AG04450 (cell line): ENCODE measurements at regions of chr13 and their contacts with region 1.

Region 1: DNA sequence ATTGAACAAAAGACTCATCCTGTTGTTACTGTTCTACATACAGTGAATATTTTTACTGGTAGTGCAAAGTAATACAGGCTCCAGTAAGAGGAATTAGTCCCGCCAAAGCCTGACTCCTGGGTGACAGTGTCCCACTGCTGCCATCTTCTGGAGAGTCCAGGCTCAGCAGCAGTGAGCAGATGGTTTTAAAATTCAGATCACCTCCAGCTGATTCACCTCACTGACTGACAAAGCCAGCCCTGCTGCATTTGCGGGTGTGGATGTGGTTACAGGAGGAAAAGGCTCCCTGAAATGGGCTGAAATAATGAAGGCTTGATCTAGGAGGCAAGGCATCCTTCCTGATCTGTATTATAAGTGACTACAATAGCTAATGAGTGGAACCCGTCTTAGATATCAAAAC is 18.3 kb downstream of the PABPC3 start:
- DNase-seq: peak; percentile 50
- H3K4me3 ChIP-seq: no peak overlapping the region
- H3K27ac ChIP-seq: no peak overlapping the region
- H3K27me3 ChIP-seq: peaks cover 4% of the 10 kb centered on the region
- CTCF ChIP-seq: peak; percentile 94

Region 2: GRCh38 chr13:24842549-24843274 is 271.5 kb before region 1 on chr13:
- CTCF ChIA-PET with region 1: no interaction called
- POLR2A ChIA-PET with region 1: no interaction called
- DNase-seq: no peak
- H3K4me3 ChIP-seq: no peak overlapping the region
- H3K27ac ChIP-seq: no peak overlapping the region
- H3K27me3 ChIP-seq: no peaks in the 10 kb centered on the region
- CTCF ChIP-seq: no peak

Region 3: DNA sequence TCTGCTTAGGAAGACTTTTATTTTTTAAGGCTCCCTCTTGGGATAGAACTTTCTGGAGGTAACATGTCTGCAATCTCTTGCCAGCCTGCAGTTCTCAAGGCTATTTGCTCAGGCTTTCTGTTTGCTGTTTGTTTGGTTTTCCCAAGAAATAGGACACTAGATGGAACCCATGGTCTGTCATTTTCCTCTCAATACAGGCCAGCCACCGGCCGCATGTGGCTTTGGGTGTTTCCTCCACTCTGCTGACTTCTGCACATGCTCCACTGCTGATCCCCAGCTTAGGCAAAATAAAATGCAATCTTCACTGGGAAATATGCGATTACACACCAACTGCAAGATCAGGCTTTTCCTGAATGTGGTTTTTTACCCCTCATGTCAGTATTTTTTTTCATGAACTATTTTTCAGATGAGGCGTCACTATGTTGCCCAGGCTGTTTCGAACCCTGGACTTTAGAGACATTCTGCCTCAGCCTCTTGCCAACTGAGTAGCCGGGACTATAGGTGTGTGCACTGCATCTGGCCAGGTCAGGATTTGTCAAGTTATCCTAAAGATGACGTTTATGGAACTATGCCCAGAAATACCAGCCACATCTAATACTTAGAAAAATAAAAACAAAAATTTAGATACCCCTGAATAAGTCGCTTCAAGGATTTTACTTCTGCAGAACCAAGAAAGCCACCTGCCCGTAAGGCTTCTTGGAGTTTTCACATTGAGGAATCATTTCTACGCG is 112.6 kb before region 1 on chr13:
- CTCF ChIA-PET with region 1: interaction called, 14 read pairs
- POLR2A ChIA-PET with region 1: no interaction called
- DNase-seq: no peak
- H3K4me3 ChIP-seq: no peak overlapping the region
- H3K27ac ChIP-seq: no peak overlapping the region
- H3K27me3 ChIP-seq: no peaks in the 10 kb centered on the region
- CTCF ChIP-seq: no peak

Region 4: GRCh38 chr13:25085125-25085742 is 29.0 kb before region 1 on chr13:
- CTCF ChIA-PET with region 1: interaction called, 17 read pairs
- POLR2A ChIA-PET with region 1: no interaction called
- DNase-seq: no peak
- H3K4me3 ChIP-seq: no peak overlapping the region
- H3K27ac ChIP-seq: no peak overlapping the region
- H3K27me3 ChIP-seq: peaks cover 2% of the 10 kb centered on the region
- CTCF ChIP-seq: peak; percentile 73

Region 5: GRCh38 chr13:25103711-25104110 is 10.5 kb before region 1 on chr13:
- CTCF ChIA-PET with region 1: interaction called, 11 read pairs
- POLR2A ChIA-PET with region 1: interaction called, 3 read pairs
- DNase-seq: no peak
- H3K4me3 ChIP-seq: no peak overlapping the region
- H3K27ac ChIP-seq: no peak overlapping the region
- H3K27me3 ChIP-seq: peaks cover 2% of the 10 kb centered on the region
- CTCF ChIP-seq: no peak

Region 6: DNA sequence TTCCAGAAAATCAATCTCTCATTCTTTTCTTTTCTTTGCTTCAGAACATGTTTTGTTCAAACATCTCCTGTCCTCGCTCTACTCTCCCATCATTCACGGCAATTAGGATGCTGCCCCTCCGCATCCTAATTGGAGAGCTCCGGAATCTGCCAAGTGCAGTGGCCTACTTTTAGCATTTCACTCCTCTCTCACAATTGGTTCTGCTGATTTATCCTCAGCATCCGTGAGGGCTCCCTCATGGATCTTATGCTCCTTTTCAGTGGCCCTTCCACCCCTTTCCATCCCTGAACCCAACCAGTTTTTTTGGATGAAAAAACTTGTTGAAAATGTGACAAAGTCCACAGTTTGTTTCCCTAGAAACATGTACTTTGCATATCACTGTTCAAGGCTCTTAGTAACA is 35.5 kb after region 1 on chr13:
- CTCF ChIA-PET with region 1: no interaction called
- POLR2A ChIA-PET with region 1: no interaction called
- DNase-seq: no peak
- H3K4me3 ChIP-seq: no peak overlapping the region
- H3K27ac ChIP-seq: no peak overlapping the region
- H3K27me3 ChIP-seq: peaks cover 2% of the 10 kb centered on the region
- CTCF ChIP-seq: no peak

Region 7: DNA sequence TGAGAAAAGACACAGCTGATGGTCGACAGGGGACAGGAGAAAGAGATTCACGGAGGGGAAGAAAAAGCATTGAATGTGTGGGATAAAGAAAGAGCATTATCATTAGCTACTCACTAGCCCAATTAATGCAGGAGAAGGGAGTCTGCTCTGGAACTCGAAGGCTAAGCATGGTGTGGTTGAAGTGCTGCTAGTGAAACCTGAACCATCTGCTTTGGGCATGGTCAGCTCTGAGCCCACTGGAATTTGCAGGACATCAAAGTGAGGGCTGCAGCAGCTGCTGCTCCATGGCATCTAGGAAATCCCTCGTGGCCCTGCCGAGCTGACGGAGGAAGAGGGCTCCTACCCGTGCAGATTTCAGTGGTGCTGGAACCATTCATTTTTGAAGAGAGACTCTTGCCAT is 577.9 kb after region 1 on chr13:
- CTCF ChIA-PET with region 1: no interaction called
- POLR2A ChIA-PET with region 1: no interaction called
- DNase-seq: no peak
- H3K4me3 ChIP-seq: no peak overlapping the region
- H3K27ac ChIP-seq: no peak overlapping the region
- H3K27me3 ChIP-seq: no peaks in the 10 kb centered on the region
- CTCF ChIP-seq: no peak